Activated naive CD4-positive, alpha-beta T cell treated with anti-CD3 and anti-CD28 coated beads for 36 hours (primary cell): ENCODE measurements at regions of chr11 and their contacts with region 1.

Region 1: DNA sequence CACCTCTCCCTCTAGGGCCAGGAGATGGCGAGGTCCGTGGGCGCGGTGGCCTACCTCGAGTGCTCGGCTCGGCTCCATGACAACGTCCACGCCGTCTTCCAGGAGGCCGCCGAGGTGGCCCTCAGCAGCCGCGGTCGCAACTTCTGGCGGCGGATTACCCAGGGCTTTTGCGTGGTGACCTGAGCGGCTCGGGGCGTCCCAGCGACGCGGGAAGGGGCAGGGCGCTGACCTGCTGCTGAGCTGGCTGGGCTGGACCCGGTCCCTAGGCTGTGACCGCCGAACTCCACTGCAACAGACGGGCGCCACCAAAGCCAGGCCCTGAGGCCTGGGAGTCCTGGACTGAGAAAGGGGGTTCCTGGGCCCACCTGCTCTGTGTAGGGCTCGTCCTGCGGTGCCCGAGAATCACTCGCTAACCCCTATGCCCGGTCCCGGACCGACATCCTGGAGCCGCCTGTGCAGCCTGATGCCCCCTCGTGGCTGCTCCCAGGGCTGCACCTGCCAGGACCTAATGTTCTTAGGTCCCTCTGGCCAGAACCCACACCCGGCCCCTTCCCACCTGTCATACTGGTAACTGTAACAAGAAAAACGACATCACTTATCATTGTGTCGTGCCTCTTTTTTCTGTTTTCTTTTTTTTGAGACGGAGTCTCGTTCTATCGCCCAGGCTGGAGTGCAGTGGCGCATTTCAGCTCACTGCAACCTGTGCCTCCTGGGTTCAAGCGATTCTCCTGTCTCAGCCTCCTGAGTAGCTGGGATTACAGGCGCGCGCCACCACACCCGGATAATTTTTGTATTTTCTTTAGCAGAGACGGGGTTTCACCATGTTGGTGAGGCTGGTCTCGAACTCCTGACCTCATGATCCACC is 15.0 kb downstream of the RHOD start:
- DNase-seq: peak; percentile 85
- H3K4me3 Mint-ChIP-seq: no peak overlapping the region
- H3K27ac Mint-ChIP-seq: no peak overlapping the region
- H3K4me1 Mint-ChIP-seq: peaks cover 5% of the 10 kb centered on the region
- H3K27me3 Mint-ChIP-seq: no peaks in the 10 kb centered on the region

Region 2: DNA sequence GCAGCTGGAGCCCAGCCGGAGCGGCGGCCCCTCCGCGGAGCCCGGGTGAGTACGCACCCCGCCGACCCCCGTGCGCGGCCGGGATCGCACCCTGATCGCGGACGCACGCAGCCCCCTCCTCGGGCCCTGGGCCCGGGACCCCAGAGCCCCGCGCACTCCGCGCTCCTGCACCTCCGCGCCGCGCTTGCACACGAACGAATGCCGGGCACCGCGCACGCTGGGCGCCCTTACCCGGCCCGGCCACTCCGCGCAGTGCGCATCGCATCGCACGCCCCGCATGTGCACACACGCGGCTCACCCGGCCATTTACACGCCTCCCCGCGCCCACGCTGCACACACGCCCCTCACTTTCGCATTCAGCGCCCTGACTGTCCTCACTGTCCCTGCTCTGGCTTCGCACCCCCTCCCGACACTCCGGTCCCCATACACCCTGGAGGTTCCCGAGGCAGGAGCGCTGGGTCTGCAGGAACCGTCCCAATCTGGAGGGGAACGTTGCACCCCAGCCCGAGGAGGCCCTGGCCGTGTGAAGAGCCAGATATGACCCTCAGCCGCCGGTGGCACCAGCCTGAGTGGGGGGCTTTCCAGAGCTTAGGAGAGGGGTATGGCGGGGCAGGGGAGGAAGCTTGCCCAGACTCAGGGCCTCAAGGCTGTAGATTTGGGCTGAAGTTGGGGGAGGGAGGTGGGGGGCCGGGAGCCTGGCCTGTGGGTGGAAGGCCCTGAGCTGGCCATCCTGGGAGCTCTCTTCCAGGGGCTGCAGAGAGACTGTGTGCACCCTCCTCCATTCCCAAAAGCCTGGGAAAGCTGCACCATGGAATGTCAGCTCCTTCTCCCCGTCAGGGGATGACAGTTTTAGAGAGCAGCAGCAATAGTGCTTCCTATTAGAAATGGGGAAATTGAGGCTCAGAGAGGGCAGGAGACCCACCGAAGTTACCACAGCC is 48.0 kb before region 1 on chr11:
- CTCF ChIA-PET with region 1: no interaction called
- intact Hi-C with region 1: no loop called
- DNase-seq: peak; percentile 18
- H3K4me3 Mint-ChIP-seq: peak overlapping the region; percentile 70
- H3K27ac Mint-ChIP-seq: no peak overlapping the region
- H3K4me1 Mint-ChIP-seq: peaks cover 29% of the 10 kb centered on the region
- H3K27me3 Mint-ChIP-seq: peaks cover 39% of the 10 kb centered on the region

Region 3: DNA sequence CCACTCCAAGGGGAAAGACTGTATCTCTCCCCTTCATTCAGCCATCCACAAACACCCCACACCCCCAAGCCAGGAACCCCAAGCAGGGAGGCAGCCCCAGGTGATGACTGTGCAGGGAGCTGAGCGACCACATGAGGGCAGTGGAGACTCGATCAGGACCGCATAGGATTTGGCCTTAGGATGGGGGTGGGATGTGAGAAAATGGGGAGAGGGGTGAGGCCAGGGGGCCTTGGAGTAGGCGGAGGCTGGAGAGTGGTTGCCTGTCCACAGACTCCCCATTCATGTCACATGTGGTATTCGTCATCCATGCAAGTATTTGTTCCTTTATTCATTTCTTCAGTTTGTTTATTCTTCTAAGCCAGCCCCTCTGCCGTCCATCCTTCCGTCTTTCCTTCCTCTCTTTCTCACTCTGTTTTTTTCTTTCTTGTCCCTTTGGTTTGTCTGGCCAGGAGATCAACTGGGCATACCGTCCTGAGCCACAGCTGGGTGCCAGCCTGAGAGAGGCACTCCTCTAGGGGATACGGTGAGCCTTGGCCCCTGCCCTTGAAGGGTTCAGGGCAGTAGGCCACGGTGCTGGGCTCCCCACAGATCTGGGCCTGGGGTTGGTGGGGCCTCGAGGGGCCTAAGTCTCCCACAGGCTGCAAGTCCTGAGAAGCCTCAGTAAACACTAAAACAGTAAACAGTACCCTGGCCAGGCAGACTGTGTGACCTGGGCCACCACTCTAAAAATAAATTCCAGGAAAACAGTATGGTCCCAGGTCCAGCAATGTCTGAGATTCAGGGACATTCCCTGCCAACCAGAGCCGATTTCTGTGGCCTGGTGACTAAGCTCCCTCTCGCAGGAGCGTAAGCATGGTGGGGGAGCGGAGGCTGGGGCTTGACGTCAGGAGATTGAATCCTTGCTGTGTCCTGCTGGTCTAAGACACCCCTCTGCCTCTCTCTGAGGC is 17.5 kb before region 1 on chr11:
- CTCF ChIA-PET with region 1: interaction called, 94 read pairs
- intact Hi-C with region 1: loop called (anchors 1 kb)
- DNase-seq: peak; percentile 75
- H3K4me3 Mint-ChIP-seq: no peak overlapping the region
- H3K27ac Mint-ChIP-seq: no peak overlapping the region
- H3K4me1 Mint-ChIP-seq: peaks cover 14% of the 10 kb centered on the region
- H3K27me3 Mint-ChIP-seq: peaks cover 2% of the 10 kb centered on the region